ENCODE measurements at regions of chr7 and their contacts with region 1.

Region 1: GRCh38 chr7:139393621-139394211 is 34.0 kb downstream of the LUC7L2 start:
- DNase-seq: no peak
- ATAC-seq: no peak
- H3K4me3 Mint-ChIP-seq: no peak overlapping the region
- H3K27ac Mint-ChIP-seq: no peak overlapping the region
- H3K4me1 Mint-ChIP-seq: peaks cover 9% of the 10 kb centered on the region
- H3K27me3 Mint-ChIP-seq: no peaks in the 10 kb centered on the region
- CTCF ChIP-seq: no peak

Region 2: DNA sequence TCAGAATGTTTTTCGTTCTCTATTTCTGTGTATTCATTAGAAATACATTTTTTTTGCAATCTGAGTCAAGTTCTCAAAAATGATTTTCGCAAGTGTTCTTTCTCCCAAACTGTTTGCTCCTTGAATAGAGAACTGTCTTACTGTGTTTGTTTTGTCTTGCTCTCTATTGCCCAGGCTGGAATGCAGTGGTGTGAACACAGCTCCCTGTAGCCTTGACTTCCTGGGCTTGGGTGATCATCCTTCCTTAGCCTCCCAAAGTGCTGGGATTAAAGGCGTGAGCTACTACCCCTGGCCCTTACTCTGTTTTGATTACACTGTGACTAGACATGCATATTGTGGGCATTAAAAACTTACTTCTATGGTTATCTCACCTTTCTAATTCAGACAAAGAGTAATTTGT is 22.7 kb after region 1 on chr7:
- CTCF ChIA-PET with region 1: no interaction called
- POLR2A ChIA-PET with region 1: no interaction called
- intact Hi-C with region 1: loop called (anchors 2 kb)
- DNase-seq: no peak
- ATAC-seq: no peak
- H3K4me3 Mint-ChIP-seq: no peak overlapping the region
- H3K27ac Mint-ChIP-seq: no peak overlapping the region
- H3K4me1 Mint-ChIP-seq: no peaks in the 10 kb centered on the region
- H3K27me3 Mint-ChIP-seq: no peaks in the 10 kb centered on the region
- CTCF ChIP-seq: no peak

Region 3: DNA sequence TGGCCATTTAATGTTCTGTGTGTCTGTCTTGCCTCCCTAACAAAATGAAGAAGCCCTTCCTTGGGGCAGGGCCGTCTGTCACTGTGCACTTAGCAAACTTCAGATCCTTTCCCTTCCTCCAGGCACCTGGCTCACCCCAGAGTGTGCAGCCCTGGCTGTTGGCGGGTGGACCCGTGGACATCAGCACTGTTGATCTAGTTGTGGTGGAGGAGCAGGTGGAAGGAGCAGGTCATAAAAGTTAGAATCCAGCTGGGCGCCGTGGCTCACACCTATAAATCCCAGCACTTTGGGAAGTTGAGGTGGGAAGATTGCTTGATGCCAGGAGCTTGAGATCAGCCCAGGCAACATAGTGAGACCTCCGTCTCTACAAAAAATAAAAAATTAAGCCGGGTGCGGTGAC is 1022.8 kb after region 1 on chr7:
- CTCF ChIA-PET with region 1: no interaction called
- POLR2A ChIA-PET with region 1: no interaction called
- intact Hi-C with region 1: no loop called
- DNase-seq: no peak
- ATAC-seq: no peak
- H3K4me3 Mint-ChIP-seq: no peak overlapping the region
- H3K27ac Mint-ChIP-seq: no peak overlapping the region
- H3K4me1 Mint-ChIP-seq: no peaks in the 10 kb centered on the region
- H3K27me3 Mint-ChIP-seq: no peaks in the 10 kb centered on the region
- CTCF ChIP-seq: no peak

Measured in activated B cell treated with CpG ODN at 0.5 μM for 24 hours (primary cell).